Esophagus squamous epithelium (tissue), 5 donors: ENCODE measurements at regions of chr2 and their contacts with region 1.

Region 1: GRCh38 chr2:207960090-207960489 is 65.2 kb downstream of the PLEKHM3 start:
- DNase-seq: no peak
- H3K4me3 ChIP-seq: no peak overlapping the region
- H3K27ac ChIP-seq: no peak overlapping the region
- H3K4me1 ChIP-seq: no peaks in the 10 kb centered on the region
- H3K27me3 ChIP-seq: no peaks in the 10 kb centered on the region
- CTCF ChIP-seq: no peak
- POLR2A ChIP-seq: no peak

Region 2: DNA sequence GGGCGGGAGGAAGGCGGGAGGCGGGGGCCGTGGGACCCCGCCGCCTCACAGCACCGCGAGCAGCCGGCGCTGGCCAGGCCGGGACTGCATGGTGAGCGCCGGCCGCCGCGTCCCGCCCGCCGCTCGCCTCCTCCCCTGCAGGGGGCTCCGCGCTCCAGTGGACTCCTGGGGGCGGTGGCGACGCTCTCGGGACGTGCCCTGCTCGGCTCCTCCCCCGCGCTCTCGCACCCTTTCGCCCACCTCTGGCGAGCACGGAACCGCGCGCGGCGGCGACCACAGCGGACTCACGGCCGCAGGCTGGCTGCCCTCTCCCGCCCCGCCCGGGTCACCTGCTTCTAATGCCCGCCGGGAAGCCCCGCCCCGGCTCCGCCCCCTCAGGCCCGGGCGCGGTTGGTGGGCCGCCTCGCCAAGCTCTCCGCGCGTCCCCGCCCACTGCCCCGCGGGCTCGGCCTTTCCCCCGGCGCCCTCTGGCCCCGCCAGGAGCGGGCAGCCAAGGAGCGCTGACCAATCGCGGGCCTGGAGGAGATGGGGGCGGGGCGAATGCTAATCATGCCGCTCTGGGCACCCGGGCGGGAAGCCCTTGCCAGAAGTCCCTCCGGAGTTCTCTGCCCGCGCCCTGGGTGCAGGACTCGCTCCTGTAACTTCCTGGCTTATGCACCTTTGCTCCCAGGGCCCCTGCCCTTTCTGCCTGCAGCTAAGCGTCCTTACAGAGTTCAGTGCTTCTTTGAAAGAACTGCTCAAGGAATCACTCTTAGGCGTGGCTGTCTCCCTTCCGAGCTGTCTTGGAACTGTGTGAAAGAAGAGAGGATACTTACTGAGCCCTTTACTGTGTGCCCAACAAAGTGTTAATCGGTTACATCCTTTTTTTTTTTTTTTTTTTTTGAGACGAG is 190.2 kb before region 1 on chr2 and contains the start of gene FZD5:
- intact Hi-C with region 1: loop called (anchors 10 kb)
- DNase-seq: peak; percentile 66
- H3K4me3 ChIP-seq: peak within 1 kb of the TSS; percentile 73 to 93 (median 83)
- H3K27ac ChIP-seq: peak within 1 kb of the TSS; percentile 76 to 90 (median 80)
- H3K4me1 ChIP-seq: peaks cover 9 to 59% (median 17%) of the 10 kb centered on the region in 3 donors
- H3K27me3 ChIP-seq: no peaks in the 10 kb centered on the region
- CTCF ChIP-seq: peak in 5 of 6 experiments; percentile 32 to 59 (median 54)
- POLR2A ChIP-seq: peak in 2 of 4 donors; percentile 52 to 88
- total RNA-seq, gene FZD5: 7.2 to 11.3 (median 8.6) TPM

Region 3: GRCh38 chr2:208101716-208102631 is 141.9 kb after region 1 on chr2:
- intact Hi-C with region 1: no loop called
- DNase-seq: no peak
- H3K4me3 ChIP-seq: no peak overlapping the region
- H3K27ac ChIP-seq: no peak overlapping the region
- H3K4me1 ChIP-seq: no peaks in the 10 kb centered on the region
- H3K27me3 ChIP-seq: peaks cover 0 to 8% (median 0%) of the 10 kb centered on the region in 4 donors
- CTCF ChIP-seq: peak in 3 of 6 experiments; percentile 5 to 16 (median 15)
- POLR2A ChIP-seq: no peak